ENCODE measurements at regions of chr1 and their contacts with region 1.

Region 1: DNA sequence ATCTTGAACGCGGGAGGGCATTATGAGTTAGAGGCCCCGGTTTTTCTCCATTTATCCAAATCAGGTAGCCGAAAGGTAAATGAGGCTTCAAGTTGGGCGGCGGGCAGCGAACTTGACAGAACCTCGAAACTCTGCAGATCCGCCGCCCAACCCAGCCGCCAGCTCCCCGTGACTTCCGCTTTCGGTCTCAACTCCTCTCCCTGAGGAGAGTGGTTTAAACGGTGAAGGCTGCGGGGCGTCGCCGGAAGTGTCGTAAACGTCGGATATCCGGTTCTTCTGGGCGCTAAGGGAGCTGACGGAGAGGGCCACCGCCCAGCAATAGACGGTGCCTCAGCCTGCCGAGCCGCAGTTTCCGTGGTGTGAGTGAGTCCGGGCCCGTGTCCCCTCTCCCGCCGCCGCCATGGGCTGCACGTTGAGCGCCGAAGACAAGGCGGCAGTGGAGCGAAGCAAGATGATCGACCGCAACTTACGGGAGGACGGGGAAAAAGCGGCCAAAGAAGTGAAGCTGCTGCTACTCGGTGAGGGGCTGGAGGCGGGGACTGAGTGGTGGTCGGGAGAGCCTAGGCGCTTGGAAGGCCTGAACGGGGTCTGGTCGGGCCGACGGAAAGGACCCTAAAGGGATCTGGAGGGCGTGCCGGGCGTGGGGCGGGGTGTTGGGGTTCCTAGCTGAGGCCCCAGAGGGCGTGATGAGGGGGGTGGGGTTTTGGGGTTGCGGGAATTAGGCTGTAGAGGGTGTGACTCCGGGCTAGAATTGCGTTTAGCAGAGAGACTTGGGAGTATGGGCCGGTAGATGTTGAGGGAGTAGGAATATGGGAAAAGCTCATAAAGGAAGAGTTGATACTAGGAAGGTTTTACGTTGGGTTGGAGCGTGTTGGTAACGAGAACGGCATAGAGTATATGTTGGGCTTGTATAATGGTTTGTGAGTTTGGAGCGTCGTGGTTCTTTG is at the start of gene GNAI3:
- DNase-seq: peak; percentile 96
- H3K4me3 ChIP-seq: peak within 1 kb of the TSS; percentile 75 to 98 (median 96)
- H3K27ac ChIP-seq: peak within 1 kb of the TSS; percentile 87
- H3K4me1 ChIP-seq: peaks cover 29% of the 10 kb centered on the region
- H3K27me3 ChIP-seq: peaks cover 0 to 2% of the 10 kb centered on the region in 2 experiments
- CTCF ChIP-seq: no peak
- POLR2A ChIP-seq: peak; percentile 89
- total RNA-seq, gene GNAI3: 12.9 and 14.0 TPM in 2 replicates

Region 2: GRCh38 chr1:108512239-108512981 is 1036.2 kb before region 1 on chr1:
- CTCF ChIA-PET with region 1: no interaction called
- POLR2A ChIA-PET with region 1: no interaction called
- dilution Hi-C with region 1: no loop called
- intact Hi-C with region 1: no loop called
- DNase-seq: peak; percentile 39
- H3K4me3 ChIP-seq: no peak overlapping the region
- H3K27ac ChIP-seq: no peak overlapping the region
- H3K4me1 ChIP-seq: no peaks in the 10 kb centered on the region
- H3K27me3 ChIP-seq: peaks cover 2 to 9% of the 10 kb centered on the region in 2 experiments
- CTCF ChIP-seq: peak; percentile 43 to 53
- POLR2A ChIP-seq: no peak

Region 3: GRCh38 chr1:109598655-109599054 is 50.1 kb after region 1 on chr1:
- CTCF ChIA-PET with region 1: interaction called, 10 read pairs
- POLR2A ChIA-PET with region 1: interaction called, 5 read pairs
- dilution Hi-C with region 1: no loop called
- intact Hi-C with region 1: loop called (anchors 1 kb)
- DNase-seq: no peak
- H3K4me3 ChIP-seq: no peak overlapping the region
- H3K27ac ChIP-seq: no peak overlapping the region
- H3K4me1 ChIP-seq: peaks cover 15% of the 10 kb centered on the region
- H3K27me3 ChIP-seq: no peaks in the 10 kb centered on the region
- CTCF ChIP-seq: peak in 1 of 2 donors; percentile 20
- POLR2A ChIP-seq: no peak

Region 4: DNA sequence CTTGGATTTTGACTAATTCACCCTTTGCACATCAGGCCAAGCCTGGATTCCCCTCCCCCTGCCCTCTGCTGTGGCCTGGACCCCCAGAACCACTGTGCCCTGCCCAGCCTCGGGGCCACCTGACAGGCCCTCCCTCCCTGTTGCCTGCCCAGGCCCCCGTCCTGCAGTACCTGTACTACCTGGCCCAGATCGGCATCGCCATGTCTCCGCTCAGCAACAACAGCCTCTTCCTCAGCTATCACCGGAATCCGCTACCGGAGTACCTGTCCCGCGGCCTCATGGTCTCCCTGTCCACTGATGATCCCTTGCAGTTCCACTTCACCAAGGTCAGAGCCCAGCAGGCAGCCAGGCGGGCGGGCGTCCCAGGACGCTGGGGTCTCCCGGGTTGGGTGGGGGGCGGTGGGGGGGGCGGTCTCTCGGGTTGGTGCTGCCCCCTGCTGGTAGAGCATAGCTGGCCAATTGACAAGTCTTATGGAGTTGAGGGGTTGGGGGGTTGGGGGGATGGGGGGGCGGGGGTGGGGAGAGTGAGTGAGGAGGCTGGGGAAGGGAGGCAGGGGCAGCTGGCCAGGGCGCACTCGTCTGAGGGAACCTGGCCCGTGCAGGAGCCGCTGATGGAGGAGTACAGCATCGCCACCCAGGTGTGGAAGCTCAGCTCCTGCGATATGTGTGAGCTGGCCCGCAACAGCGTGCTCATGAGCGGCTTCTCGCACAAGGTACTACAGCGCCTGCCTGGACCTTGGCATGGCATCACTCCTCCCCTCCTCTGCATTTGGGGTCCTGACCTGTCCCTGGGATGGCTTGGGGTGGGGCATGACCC is 81.7 kb after region 1 on chr1:
- CTCF ChIA-PET with region 1: interaction called, 565 read pairs
- POLR2A ChIA-PET with region 1: interaction called, 11 read pairs
- dilution Hi-C with region 1: no loop called
- intact Hi-C with region 1: loop called (anchors 1 kb)
- DNase-seq: no peak
- H3K4me3 ChIP-seq: no peak overlapping the region
- H3K27ac ChIP-seq: no peak overlapping the region
- H3K4me1 ChIP-seq: no peaks in the 10 kb centered on the region
- H3K27me3 ChIP-seq: no peaks in the 10 kb centered on the region
- CTCF ChIP-seq: peak in 1 of 2 donors; percentile 26
- POLR2A ChIP-seq: no peak

Region 5: DNA sequence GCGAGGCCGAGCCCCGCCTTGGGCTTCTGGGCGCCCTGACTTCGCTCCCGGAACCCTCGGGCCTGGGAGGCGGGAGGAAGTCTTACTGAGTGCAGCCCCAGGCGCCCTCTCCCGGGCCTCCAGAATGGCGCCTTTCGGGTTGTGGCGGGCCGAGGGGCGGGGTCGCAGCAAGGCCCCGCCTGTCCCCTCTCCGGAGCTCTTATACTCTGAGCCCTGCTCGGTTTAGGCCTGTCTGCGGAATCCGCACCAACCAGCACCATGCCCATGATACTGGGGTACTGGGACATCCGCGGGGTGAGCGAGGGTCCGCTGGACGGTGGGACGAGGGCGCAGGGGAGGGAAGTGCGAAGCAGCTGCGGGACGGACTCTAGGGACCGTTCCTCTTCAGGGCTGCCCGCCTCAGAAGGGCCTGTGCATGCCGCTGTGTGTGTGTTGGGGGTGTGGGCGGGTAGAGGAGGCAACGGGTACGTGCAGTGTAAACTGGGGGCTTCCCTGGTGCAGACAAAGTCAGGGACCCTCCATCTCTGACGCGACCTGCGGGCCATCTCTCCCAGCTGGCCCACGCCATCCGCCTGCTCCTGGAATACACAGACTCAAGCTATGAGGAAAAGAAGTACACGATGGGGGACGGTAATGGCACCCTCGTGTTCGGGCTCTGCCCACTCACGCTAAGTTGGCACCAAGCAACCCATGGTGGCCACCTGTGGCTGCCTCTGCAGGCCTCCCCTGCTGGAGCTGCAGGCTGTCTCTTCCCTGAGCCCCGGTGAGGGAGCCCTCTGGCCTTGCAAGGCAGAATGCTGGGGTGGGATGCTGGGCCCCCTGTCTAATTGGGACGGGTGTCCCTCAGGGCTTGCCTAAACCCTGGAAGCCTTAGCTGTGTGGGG is 139.3 kb after region 1 on chr1 and contains the start of gene GSTM1:
- CTCF ChIA-PET with region 1: interaction called, 20 read pairs
- POLR2A ChIA-PET with region 1: interaction called, 3 read pairs
- dilution Hi-C with region 1: no loop called
- intact Hi-C with region 1: no loop called
- DNase-seq: no peak
- H3K4me3 ChIP-seq: no peak within 1 kb of the TSS
- H3K27ac ChIP-seq: no peak within 1 kb of the TSS
- H3K4me1 ChIP-seq: no peaks in the 10 kb centered on the region
- H3K27me3 ChIP-seq: no peaks in the 10 kb centered on the region
- CTCF ChIP-seq: no peak
- POLR2A ChIP-seq: no peak
- total RNA-seq, gene GSTM1: 35.5 TPM in 1 of 2 replicates, not detected in the other

Region 6: GRCh38 chr1:109773146-109773899 is 224.7 kb after region 1 on chr1:
- CTCF ChIA-PET with region 1: interaction called, 104 read pairs
- POLR2A ChIA-PET with region 1: no interaction called
- dilution Hi-C with region 1: no loop called
- intact Hi-C with region 1: loop called (anchors 1 kb)
- DNase-seq: peak; percentile 78
- H3K4me3 ChIP-seq: no peak overlapping the region
- H3K27ac ChIP-seq: no peak overlapping the region
- H3K4me1 ChIP-seq: no peaks in the 10 kb centered on the region
- H3K27me3 ChIP-seq: peaks cover 0 to 4% of the 10 kb centered on the region in 2 experiments
- CTCF ChIP-seq: peak; percentile 88 to 92
- POLR2A ChIP-seq: no peak